Mammary epithelial cell (primary cell): ENCODE measurements at regions of chr9 and their contacts with region 1.

Region 1: DNA sequence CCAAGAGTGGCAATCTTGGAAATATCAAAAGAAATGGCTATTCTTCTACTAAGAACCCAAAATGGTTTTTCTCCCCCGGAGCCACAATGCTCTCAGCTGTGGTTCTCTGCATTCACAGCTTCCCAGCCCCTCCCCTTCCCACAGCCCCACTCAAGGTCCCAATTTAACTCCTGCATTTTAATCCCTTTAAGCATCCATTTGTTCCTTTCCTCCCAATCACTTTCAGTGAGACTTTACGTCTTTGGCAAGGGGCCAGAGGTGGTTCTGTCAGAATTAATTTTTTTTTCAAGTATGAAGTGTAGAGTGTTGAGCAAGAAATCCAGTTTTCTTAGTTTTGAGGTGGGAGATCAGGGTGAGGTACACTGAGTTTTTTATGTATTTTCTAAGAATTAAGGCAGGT is 256.9 kb downstream of the GLIS3 start:
- DNase-seq: no peak
- H3K4me3 ChIP-seq: no peak overlapping the region
- H3K27ac ChIP-seq: no peak overlapping the region
- H3K4me1 ChIP-seq: no peaks in the 10 kb centered on the region
- H3K27me3 ChIP-seq: no peaks in the 10 kb centered on the region
- CTCF ChIP-seq: no peak

Region 2: DNA sequence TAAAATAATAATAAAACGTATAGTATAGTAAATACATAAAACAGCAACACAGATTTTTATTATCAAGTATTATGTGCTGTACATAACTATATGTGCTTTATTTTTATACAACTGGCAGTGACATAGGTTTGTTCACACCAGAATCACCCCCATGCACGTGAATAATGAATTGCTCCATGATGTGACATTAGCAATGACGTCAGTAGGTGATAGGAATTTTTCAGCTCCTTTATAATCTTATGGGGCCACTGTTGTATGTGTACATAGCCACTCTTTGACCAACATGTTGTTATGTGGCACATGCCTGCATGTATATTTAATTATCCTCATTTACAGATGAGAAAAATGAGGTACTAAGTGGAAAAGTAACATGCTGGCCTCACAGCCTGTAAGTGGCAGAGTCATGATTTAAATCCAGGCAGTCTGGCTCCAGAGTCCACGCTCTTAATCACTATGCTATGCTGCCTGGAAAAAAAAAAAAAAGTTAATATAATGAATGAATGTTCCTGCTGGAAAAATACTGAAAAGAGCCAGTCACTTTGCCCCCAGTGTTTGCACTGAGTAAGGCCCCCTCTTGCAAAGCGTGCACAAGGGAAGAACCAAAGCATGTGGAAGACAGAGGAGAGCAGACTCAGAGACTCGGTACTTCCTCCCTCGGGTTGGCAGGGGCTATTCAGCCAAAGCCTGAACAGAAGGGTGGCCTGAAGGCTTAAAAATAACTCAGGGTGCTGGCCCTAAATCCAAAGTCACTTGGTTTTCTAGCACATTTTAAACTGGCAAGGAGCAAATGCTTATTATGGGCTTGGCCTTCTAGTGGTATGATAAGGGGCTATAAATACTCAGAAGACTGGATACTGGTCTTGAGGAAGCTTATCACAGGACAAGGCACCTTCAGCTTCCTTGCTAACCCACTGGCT is 50.1 kb after region 1 on chr9:
- CTCF ChIA-PET with region 1: no interaction called
- dilution Hi-C with region 1: loop called (anchors 5 kb)
- in situ Hi-C with region 1: no loop called
- intact Hi-C with region 1: no loop called
- DNase-seq: no peak
- H3K4me3 ChIP-seq: no peak overlapping the region
- H3K27ac ChIP-seq: no peak overlapping the region
- H3K4me1 ChIP-seq: no peaks in the 10 kb centered on the region
- H3K27me3 ChIP-seq: no peaks in the 10 kb centered on the region
- CTCF ChIP-seq: no peak

Region 3: DNA sequence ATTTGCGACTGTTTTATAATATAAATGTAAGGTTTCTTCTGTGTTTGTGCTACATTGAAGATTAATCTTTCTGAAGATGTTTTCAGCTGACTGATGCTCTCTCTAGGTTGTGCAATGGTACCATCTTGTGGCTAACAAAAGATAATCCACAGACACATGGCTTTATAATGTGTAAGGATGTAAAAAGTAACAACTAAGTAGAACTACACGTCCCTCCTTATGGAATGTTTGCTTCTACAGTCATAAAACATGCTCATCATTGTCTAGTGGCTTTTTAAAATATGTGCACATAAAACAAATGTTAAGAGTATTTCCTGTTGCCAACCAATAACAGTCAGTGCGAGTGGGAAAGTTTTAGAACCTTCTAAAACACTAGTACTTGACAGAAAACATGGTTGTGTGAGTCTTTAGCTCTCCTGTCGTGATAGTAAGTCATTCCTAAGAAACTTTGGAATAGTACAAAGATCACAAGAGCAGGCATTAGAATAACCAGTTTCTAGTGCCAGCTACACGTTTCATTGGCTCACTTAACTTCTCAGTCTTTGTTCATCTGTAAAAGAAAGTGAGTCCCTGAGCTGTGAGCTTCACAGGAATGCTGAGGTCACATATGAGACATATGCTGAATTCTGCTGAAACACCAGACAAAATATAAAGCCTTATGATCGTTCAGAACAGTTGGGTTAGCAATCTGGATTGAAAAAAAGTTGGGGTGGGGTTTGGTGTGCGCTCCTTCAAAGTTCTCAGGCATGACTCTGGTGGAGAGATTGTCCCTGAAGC is 332.6 kb after region 1 on chr9:
- CTCF ChIA-PET with region 1: no interaction called
- dilution Hi-C with region 1: no loop called
- in situ Hi-C with region 1: no loop called
- intact Hi-C with region 1: no loop called
- DNase-seq: peak; percentile 56
- H3K4me3 ChIP-seq: no peak overlapping the region
- H3K27ac ChIP-seq: no peak overlapping the region
- H3K4me1 ChIP-seq: peaks cover 6% of the 10 kb centered on the region
- H3K27me3 ChIP-seq: no peaks in the 10 kb centered on the region
- CTCF ChIP-seq: peak; percentile 60